CD4-positive, alpha-beta T cell (primary cell): ENCODE measurements at regions of chr14 and their contacts with region 1.

Region 1: DNA sequence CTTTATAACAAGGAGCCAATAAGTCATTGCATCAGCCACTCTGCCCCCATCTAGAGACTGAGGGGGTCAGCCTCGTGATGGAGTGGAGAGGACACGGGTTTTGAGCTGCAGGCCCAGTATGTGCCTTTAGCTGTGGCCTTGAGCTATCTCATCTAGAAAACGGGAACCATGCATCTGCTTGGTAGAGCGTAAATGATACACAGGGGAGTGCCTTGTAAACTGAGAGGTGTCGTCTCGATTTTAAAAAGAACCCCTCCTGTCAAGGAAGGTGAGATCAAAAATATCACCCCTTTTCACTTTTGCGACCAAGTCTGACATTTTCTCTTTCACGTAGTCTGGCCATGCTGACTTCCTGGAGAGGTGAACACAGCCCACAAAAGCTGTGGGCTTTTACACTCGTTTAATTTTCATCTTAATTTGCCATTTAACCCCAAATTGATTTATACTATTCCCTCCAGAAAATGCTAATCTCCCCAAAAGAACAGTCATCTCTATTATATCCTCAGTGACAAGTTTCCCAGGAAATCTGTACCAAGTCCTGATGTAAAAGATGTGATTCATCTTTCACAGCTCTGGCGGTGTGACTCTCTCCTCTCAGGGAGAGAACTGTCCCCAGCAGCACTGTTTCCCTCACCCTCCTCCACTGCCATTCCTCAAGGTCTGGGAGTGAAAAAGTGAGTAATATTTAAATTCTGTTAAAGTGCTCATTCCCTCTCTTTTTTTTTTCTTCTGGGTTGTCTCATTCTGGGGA is 30.6 kb downstream of the VCPKMT start:
- DNase-seq: peak in 4 of 14 experiments; percentile 28 to 65 (median 55)
- ATAC-seq: no peak
- H3K4me3 ChIP-seq: no peak overlapping the region
- H3K4me3 Mint-ChIP-seq: peak overlapping the region; percentile 65
- H3K27ac ChIP-seq: peak overlapping the region; percentile 96 to 97
- H3K27ac Mint-ChIP-seq: peak overlapping the region; percentile 93
- H3K4me1 ChIP-seq: peaks cover 80% of the 10 kb centered on the region
- H3K4me1 Mint-ChIP-seq: peaks cover 89% of the 10 kb centered on the region
- H3K27me3 ChIP-seq: no peaks in the 10 kb centered on the region
- H3K27me3 Mint-ChIP-seq: no peaks in the 10 kb centered on the region
- CTCF ChIP-seq: no peak

Region 2: GRCh38 chr14:50045039-50045711 is 40.6 kb before region 1 on chr14:
- CTCF ChIA-PET with region 1: no interaction called
- POLR2A ChIA-PET with region 1: interaction called, 18 read pairs
- intact Hi-C with region 1: loop called in 1 of 2 experiments (anchors 2 kb)
- DNase-seq: peak; percentile 35 to 93 (median 72)
- ATAC-seq: peak; percentile 67
- H3K4me3 ChIP-seq: no peak overlapping the region
- H3K4me3 Mint-ChIP-seq: peak overlapping the region; percentile 43
- H3K27ac ChIP-seq: peak overlapping the region; percentile 48 to 78
- H3K27ac Mint-ChIP-seq: peak overlapping the region; percentile 89
- H3K4me1 ChIP-seq: peaks cover 72% of the 10 kb centered on the region
- H3K4me1 Mint-ChIP-seq: peaks cover 65% of the 10 kb centered on the region
- H3K27me3 ChIP-seq: no peaks in the 10 kb centered on the region
- H3K27me3 Mint-ChIP-seq: no peaks in the 10 kb centered on the region
- CTCF ChIP-seq: no peak

Region 3: GRCh38 chr14:50099335-50099734 is 13.6 kb after region 1 on chr14:
- CTCF ChIA-PET with region 1: interaction called, 10 read pairs
- POLR2A ChIA-PET with region 1: interaction called, 36 read pairs
- intact Hi-C with region 1: loop called (anchors 1 to 2 kb)
- DNase-seq: peak in 1 of 14 experiments; percentile 39
- ATAC-seq: no peak
- H3K4me3 ChIP-seq: no peak overlapping the region
- H3K4me3 Mint-ChIP-seq: peak overlapping the region; percentile 12
- H3K27ac ChIP-seq: no peak overlapping the region
- H3K27ac Mint-ChIP-seq: peak overlapping the region; percentile 79
- H3K4me1 ChIP-seq: peaks cover 47% of the 10 kb centered on the region
- H3K4me1 Mint-ChIP-seq: peaks cover 64% of the 10 kb centered on the region
- H3K27me3 ChIP-seq: no peaks in the 10 kb centered on the region
- H3K27me3 Mint-ChIP-seq: no peaks in the 10 kb centered on the region
- CTCF ChIP-seq: no peak